HepG2 (cell line): ENCODE measurements at regions of chr17 and their contacts with region 1.

Region 1: GRCh38 chr17:28967221-28968140 is 16.2 kb upstream of the PHF12 start:
- DNase-seq: no peak
- ATAC-seq: no peak
- H3K4me3 ChIP-seq: no peak overlapping the region
- H3K27ac ChIP-seq: no peak overlapping the region
- H3K4me1 ChIP-seq: peaks cover 58% of the 10 kb centered on the region
- H3K27me3 ChIP-seq: peaks cover 2 to 61% of the 10 kb centered on the region in 2 experiments; a peak in 4 of 5 replicates
- CTCF ChIP-seq: no peak
- EP300 ChIP-seq: no peak
- POLR2A ChIP-seq: no peak
- RAD21 ChIP-seq: no peak

Region 2: DNA sequence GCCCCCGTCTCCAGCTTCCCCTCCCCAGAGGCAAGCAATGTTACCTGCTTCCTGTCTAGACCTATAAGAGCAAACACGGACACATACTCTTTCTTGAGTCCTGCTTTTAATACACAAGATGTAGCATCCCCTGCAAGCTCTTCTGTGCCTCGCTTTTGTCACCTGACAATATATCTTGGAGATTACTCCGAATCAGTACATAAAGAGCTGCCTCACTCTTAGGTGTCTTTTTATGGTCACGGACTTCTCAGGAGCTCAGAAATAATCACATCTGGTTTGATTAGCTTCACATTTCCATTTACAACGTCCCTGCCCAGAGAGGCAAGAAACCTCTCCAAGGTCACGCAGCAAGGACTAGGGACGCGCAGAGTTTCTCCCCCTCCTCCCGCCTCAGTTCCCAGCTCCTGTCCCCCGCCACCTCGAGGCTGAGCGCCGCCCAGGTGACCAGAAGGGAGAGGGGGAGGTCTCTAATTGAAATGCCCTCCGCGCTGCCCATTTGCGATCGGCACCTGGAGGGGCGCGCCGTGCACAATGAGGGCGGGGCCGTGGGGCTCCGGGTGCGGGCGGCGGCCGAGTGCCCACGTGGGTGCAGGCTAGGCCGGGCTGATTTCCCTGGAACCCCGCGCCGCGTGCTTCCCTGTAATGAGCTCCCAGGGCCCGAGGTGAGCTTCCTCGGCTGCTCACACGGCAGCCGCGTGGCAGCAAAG is 52.1 kb after region 1 on chr17:
- CTCF ChIA-PET with region 1: no interaction called
- POLR2A ChIA-PET with region 1: no interaction called
- in situ Hi-C with region 1: no loop called
- intact Hi-C with region 1: loop called (anchors 10 kb)
- DNase-seq: no peak
- ATAC-seq: peak; percentile 61
- H3K4me3 ChIP-seq: peak overlapping the region in 2 of 3 experiments; percentile 17 to 50; a peak in 1 of 6 replicates
- H3K27ac ChIP-seq: no peak overlapping the region
- H3K4me1 ChIP-seq: peaks cover 19% of the 10 kb centered on the region
- H3K27me3 ChIP-seq: peaks cover 3 to 84% of the 10 kb centered on the region in 2 experiments; a peak in 4 of 5 replicates
- CTCF ChIP-seq: no peak
- EP300 ChIP-seq: no peak
- POLR2A ChIP-seq: no peak
- RAD21 ChIP-seq: no peak

Region 3: DNA sequence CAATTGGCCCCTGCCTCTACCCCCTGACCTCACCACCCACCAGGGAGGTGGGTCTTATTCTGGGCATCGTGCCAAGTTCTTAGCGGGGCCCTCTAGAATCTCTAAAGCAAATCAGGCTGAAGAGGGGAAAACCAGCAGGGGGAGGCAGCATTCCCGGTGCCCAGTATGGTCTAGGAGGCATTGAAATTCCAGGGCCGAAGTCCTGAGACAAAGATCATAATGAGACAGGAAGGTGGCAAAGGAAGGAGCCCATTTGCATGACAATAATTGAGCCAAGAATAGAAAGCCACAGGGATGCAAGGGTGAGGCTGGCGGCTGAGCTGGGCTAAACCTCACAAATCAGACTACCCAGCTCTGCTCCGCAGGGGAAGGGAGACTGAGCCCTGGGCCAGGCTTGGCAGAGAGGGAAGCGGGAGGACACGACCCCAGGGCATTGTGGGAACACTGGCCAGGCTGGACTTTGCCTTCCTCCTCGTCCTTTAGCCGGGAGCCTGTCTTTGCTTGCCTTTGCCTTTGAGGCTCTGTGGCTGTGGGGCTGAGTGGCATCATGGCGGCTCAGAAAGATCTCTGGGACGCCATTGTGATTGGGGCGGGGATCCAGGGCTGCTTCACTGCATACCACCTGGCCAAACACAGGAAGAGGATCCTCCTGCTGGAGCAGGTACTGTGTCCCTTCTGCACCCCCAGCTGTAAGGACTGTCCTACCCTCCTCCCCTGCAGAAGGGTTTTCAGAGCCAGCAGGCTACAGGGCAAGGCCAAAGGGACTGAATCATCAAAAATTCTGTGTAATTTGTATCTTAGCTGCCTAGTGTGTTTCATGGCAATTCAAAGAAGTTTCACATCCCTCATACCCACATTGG is 75.4 kb after region 1 on chr17 and contains the start of gene PIPOX:
- CTCF ChIA-PET with region 1: no interaction called
- POLR2A ChIA-PET with region 1: interaction called, 3 read pairs
- in situ Hi-C with region 1: no loop called
- intact Hi-C with region 1: loop called (anchors 2 kb)
- DNase-seq: peak; percentile 90
- ATAC-seq: peak; percentile 87
- H3K4me3 ChIP-seq: peak within 1 kb of the TSS; percentile 63 to 78 (median 63)
- H3K27ac ChIP-seq: peak within 1 kb of the TSS; percentile 94
- H3K4me1 ChIP-seq: peaks cover 87% of the 10 kb centered on the region
- H3K27me3 ChIP-seq: peaks cover 0 to 3% of the 10 kb centered on the region in 2 experiments; a peak in 1 of 5 replicates
- CTCF ChIP-seq: peak; percentile 74
- EP300 ChIP-seq: no peak
- POLR2A ChIP-seq: peak; percentile 83 to 92
- RAD21 ChIP-seq: no peak
- total RNA-seq, gene PIPOX: 87.3 and 118 TPM in 2 replicates

Region 4: DNA sequence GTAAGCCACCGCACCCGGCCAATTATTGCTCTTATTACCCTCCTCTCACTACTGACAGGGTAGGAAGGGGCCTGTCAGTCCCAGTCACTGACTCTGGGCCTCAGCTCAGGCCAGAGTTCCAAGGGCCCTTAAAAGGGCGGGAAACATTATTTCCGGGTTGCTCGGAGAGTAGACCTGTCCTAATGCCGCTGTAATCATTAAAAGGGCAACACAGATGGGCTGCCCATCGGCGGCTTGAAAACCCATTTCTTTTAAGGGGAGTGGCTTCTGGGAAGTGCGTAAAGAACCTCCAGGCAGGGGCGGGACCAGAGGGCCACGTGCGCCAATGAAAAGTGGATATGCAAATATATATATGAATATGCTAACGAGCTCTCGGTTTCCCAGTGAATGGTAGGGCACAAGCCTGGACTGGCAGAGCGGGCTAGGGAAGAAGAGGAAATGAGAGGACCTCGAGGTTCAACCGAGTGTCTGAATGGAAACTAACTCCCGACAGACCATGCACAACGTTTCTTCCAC is 102.1 kb after region 1 on chr17:
- CTCF ChIA-PET with region 1: no interaction called
- POLR2A ChIA-PET with region 1: interaction called, 4 read pairs
- in situ Hi-C with region 1: no loop called
- intact Hi-C with region 1: loop called (anchors 10 kb)
- DNase-seq: no peak
- ATAC-seq: no peak
- H3K4me3 ChIP-seq: no peak overlapping the region
- H3K27ac ChIP-seq: no peak overlapping the region
- H3K4me1 ChIP-seq: no peaks in the 10 kb centered on the region
- H3K27me3 ChIP-seq: no peaks in the 10 kb centered on the region
- CTCF ChIP-seq: no peak
- EP300 ChIP-seq: no peak
- POLR2A ChIP-seq: no peak
- RAD21 ChIP-seq: no peak

Region 5: DNA sequence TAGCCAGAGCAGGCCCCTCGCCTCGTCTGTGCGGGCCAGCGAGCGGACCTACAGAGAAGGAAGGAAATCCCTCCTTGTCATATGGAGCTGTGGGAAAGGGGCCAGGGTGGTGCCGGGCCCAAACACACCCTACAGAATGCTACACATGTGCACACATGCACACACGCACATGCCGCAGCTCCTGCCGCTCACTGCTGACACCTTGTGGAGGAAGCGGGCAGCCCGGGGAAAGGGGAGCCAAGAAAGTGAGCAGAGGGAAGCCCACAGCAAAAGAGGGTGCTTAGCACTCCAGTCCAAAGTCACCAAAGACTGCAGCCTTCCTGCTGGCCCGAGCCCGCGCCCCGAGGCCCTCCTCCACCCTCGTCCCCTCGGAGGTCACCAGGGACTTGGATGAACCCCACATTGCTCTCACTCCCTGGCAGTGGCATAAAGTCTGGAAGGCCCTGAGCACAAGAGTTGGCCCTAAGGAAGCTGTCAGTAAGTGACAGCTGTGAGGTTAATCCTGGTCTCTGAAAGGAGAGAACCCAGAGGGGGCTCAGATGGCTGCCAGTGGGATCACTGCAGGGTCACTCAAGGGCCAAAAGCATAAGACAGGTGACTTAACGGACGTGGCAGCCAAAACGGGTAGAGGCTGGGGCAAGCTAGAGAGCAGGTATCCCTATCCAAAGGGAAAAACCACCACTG is 144.5 kb after region 1 on chr17:
- CTCF ChIA-PET with region 1: interaction called, 41 read pairs
- POLR2A ChIA-PET with region 1: interaction called, 9 read pairs
- in situ Hi-C with region 1: loop called (anchors 5 kb)
- intact Hi-C with region 1: loop called (anchors 2 kb)
- DNase-seq: peak; percentile 41
- ATAC-seq: peak; percentile 74
- H3K4me3 ChIP-seq: no peak overlapping the region
- H3K27ac ChIP-seq: no peak overlapping the region
- H3K4me1 ChIP-seq: peaks cover 16% of the 10 kb centered on the region
- H3K27me3 ChIP-seq: no peaks in the 10 kb centered on the region
- CTCF ChIP-seq: peak; percentile 95
- EP300 ChIP-seq: no peak
- POLR2A ChIP-seq: no peak
- RAD21 ChIP-seq: peak; percentile 80

Region 6: GRCh38 chr17:29116804-29117772 is 149.6 kb after region 1 on chr17:
- CTCF ChIA-PET with region 1: interaction called, 41 read pairs
- POLR2A ChIA-PET with region 1: interaction called, 9 read pairs
- in situ Hi-C with region 1: no loop called
- intact Hi-C with region 1: loop called (anchors 2 kb)
- DNase-seq: peak; percentile 18
- ATAC-seq: peak; percentile 57
- H3K4me3 ChIP-seq: no peak overlapping the region
- H3K27ac ChIP-seq: no peak overlapping the region
- H3K4me1 ChIP-seq: no peaks in the 10 kb centered on the region
- H3K27me3 ChIP-seq: no peaks in the 10 kb centered on the region
- CTCF ChIP-seq: peak; percentile 94
- EP300 ChIP-seq: no peak
- POLR2A ChIP-seq: no peak
- RAD21 ChIP-seq: peak; percentile 58; the same call in 1 of the 2 replicates